CD14-positive monocyte (primary cell): ENCODE measurements at regions of chr9 and their contacts with region 1.

Region 1: DNA sequence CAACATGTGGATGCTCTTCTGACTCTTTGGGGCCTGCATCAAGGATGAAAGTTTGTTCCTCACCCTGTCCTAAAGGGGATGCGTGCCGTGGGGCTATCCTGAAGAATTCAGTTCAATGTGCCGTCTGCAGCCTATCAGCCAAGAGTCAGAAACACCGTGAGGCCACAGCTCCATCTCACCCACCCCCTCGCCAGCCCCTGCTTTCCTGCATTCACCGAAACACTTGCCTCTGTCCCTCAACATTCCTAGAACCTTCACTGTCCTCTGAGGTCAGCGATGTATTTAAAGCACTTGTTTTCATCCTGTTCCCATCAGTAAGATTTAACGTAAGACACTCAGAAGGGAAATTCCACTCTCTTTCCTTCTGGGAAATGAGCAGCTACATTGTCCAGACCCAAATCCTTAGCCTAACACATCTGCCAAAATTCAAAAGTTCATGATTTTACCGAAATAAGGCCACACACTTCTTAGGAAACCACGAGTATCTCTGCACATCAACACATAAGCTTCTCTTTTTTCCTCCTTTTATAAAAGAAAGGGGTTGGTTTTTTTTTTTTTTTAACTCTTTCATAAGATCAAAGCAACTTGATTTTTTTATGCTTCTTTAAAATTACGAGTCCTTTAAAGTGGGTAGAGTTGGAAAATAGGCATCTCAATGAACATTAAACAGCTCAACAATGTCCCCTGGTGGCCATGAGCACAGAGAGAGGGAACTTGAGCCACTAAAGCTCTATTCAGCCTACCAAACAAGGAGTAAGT is 100.7 kb downstream of the SUSD1 start:
- DNase-seq: peak; percentile 20 to 53 (median 39)
- H3K4me3 ChIP-seq: no peak overlapping the region
- H3K4me3 Mint-ChIP-seq: no peak overlapping the region
- H3K27ac ChIP-seq: peak overlapping the region in 1 of 2 donors; percentile 22
- H3K27ac Mint-ChIP-seq: peak overlapping the region in 5 of 7 donors; percentile 8 to 63 (median 56)
- H3K4me1 ChIP-seq: peaks cover 10 to 15% of the 10 kb centered on the region in 2 donors
- H3K4me1 Mint-ChIP-seq: peaks cover 37% of the 10 kb centered on the region
- H3K27me3 ChIP-seq: no peaks in the 10 kb centered on the region
- H3K27me3 Mint-ChIP-seq: no peaks in the 10 kb centered on the region
- CTCF ChIP-seq: peak; percentile 87

Region 2: GRCh38 chr9:111597817-111598729 is 476.4 kb before region 1 on chr9:
- intact Hi-C with region 1: loop called in 1 of 2 experiments (anchors 10 kb)
- DNase-seq: peak; percentile 14 to 19 (median 18)
- H3K4me3 ChIP-seq: peak overlapping the region; percentile 57 to 86 (median 59)
- H3K4me3 Mint-ChIP-seq: peak overlapping the region; percentile 98 to 100
- H3K27ac ChIP-seq: no peak overlapping the region
- H3K27ac Mint-ChIP-seq: peak overlapping the region in 2 of 7 donors; percentile 30 to 57
- H3K4me1 ChIP-seq: peaks cover 15 to 25% of the 10 kb centered on the region in 2 donors
- H3K4me1 Mint-ChIP-seq: peaks cover 27% of the 10 kb centered on the region
- H3K27me3 ChIP-seq: peaks cover 0 to 35% of the 10 kb centered on the region in 2 donors
- H3K27me3 Mint-ChIP-seq: peaks cover 28 to 51% (median 33%) of the 10 kb centered on the region in 3 donors
- CTCF ChIP-seq: peak; percentile 63

Region 3: DNA sequence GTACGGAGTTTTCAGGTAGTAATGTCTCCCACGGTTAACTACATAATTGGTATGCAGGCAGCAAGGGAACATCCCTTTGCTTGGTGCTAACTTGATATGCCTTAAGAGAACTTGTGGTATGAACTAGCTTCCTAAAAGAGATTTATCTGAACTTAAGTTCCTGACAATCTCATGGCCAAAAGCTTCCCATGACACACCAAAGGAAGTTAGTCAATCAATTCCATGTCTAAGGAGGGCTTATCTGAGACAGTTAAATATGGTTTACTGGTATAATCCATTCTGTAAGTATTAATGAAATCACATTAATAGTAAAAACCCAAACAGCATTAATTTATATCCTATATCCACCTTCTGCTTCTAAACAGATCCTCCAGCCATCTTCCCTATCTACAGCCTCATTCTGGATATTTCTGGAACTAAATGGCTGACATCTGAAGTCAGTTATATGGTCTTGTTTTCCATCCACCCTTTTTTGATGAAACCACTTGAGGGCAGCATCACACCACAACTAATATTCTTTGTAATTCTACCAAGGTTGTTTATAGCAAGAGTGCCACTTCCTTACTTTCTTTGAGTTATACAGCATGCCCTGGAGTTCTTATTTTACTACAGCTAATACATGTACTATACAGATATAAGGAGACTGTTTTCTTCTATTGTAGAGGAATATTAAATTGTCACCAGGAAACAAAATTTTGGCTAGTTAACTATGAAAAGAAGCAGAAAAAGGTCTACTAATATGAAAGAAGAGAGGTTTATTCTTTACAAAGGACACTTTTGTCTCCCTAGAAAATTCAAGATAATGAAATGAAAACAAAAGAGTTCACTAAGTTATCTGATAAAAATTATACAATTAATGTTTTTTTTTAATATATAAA is 314.4 kb before region 1 on chr9:
- intact Hi-C with region 1: loop called (anchors 1 to 5 kb)
- DNase-seq: peak; percentile 32 to 48 (median 39)
- H3K4me3 ChIP-seq: no peak overlapping the region
- H3K4me3 Mint-ChIP-seq: no peak overlapping the region
- H3K27ac ChIP-seq: no peak overlapping the region
- H3K27ac Mint-ChIP-seq: no peak overlapping the region
- H3K4me1 ChIP-seq: no peaks in the 10 kb centered on the region
- H3K4me1 Mint-ChIP-seq: no peaks in the 10 kb centered on the region
- H3K27me3 ChIP-seq: no peaks in the 10 kb centered on the region
- H3K27me3 Mint-ChIP-seq: peaks cover 0 to 2% (median 0%) of the 10 kb centered on the region in 3 donors
- CTCF ChIP-seq: peak; percentile 65

Region 4: DNA sequence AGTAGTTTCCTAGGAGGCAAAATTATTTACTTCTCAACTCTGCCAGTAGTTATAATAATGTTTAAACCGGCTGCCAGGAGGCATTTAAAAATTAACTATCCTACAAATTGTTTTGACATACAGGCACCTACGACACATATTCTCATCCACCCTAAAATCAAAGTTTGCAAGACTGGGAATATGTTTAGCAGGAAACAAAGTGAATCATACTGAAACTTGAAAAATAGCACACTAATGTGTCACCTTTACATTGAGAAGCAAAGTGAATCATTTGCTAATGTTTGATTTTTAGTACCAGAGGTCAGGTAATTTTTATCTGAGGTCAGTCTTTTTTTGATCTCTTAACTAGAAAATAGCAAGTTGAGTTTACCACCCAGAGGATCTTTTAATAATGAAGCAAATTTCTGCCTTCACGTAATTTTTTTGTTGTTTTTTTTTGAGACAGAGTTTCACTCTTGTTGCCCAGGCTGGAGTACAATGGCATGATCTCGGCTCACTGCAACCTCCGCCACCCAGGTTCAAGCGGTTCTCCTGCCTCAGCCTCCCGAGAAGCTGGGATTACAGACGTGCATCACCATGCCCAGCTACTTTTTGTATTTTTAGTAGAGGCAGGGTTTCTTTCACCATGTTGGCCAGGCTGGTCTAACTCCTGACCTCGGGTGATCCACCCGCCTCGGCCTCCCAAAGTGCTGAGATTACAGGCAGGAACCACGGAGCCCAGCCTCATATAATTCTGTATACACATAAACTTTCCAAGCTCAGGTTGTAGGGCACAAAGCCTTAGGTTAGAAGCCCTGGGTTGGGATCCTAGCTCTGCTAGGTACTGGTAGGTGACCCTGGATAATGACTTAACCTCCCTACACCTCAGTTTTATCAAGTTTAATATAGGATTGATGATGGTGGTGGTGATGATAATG is 53.5 kb before region 1 on chr9:
- intact Hi-C with region 1: no loop called
- DNase-seq: no peak
- H3K4me3 ChIP-seq: no peak overlapping the region
- H3K4me3 Mint-ChIP-seq: no peak overlapping the region
- H3K27ac ChIP-seq: no peak overlapping the region
- H3K27ac Mint-ChIP-seq: no peak overlapping the region
- H3K4me1 ChIP-seq: no peaks in the 10 kb centered on the region
- H3K4me1 Mint-ChIP-seq: peaks cover 3% of the 10 kb centered on the region
- H3K27me3 ChIP-seq: peaks cover 0 to 2% of the 10 kb centered on the region in 2 donors
- H3K27me3 Mint-ChIP-seq: peaks cover 12 to 26% (median 24%) of the 10 kb centered on the region in 3 donors
- CTCF ChIP-seq: no peak

Region 5: DNA sequence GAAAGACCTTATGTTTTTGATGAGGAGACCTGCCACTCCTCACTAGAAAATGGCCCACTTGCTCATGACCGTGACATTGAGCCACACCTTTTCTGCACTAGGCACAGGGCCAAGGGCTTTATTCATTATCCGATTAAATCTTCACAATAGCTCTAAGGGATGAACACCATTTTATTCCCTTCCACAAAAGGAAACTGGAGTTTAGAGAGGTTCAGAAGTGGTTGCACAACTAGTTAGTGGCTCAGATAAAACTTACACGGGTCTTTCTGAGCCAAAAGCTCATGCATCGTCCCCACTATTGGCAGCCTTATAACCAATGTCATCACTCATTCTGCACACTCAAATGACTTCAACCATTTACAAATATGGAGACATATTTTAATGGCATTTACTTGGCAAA is 61.3 kb after region 1 on chr9:
- intact Hi-C with region 1: no loop called
- DNase-seq: no peak
- H3K4me3 ChIP-seq: no peak overlapping the region
- H3K4me3 Mint-ChIP-seq: no peak overlapping the region
- H3K27ac ChIP-seq: no peak overlapping the region
- H3K27ac Mint-ChIP-seq: no peak overlapping the region
- H3K4me1 ChIP-seq: no peaks in the 10 kb centered on the region
- H3K4me1 Mint-ChIP-seq: no peaks in the 10 kb centered on the region
- H3K27me3 ChIP-seq: no peaks in the 10 kb centered on the region
- H3K27me3 Mint-ChIP-seq: no peaks in the 10 kb centered on the region
- CTCF ChIP-seq: no peak

Region 6: DNA sequence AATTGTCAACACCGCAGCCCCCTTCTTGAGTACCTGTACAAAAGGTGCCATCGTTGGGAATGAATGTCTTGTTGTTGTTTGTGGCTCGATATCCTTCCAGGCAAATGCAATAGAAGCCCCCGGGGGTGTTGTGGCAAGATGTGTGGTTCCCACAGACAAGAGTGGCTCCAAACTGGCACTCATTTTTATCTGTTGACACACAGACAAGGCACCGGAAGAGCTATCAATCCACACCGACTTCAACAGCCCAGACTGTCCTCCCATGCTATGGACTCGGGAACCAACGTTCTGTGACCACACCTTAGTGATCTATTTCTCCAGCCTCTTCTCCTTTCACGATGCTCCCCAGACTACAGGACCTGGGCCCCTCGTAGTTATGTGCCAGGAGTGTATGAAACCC is 74.8 kb after region 1 on chr9:
- intact Hi-C with region 1: no loop called
- DNase-seq: no peak
- H3K4me3 ChIP-seq: no peak overlapping the region
- H3K4me3 Mint-ChIP-seq: no peak overlapping the region
- H3K27ac ChIP-seq: no peak overlapping the region
- H3K27ac Mint-ChIP-seq: no peak overlapping the region
- H3K4me1 ChIP-seq: no peaks in the 10 kb centered on the region
- H3K4me1 Mint-ChIP-seq: no peaks in the 10 kb centered on the region
- H3K27me3 ChIP-seq: no peaks in the 10 kb centered on the region
- H3K27me3 Mint-ChIP-seq: peaks cover 0 to 3% (median 0%) of the 10 kb centered on the region in 3 donors
- CTCF ChIP-seq: no peak